ENCODE measurements at regions of chr7 and their contacts with region 1.

Region 1: DNA sequence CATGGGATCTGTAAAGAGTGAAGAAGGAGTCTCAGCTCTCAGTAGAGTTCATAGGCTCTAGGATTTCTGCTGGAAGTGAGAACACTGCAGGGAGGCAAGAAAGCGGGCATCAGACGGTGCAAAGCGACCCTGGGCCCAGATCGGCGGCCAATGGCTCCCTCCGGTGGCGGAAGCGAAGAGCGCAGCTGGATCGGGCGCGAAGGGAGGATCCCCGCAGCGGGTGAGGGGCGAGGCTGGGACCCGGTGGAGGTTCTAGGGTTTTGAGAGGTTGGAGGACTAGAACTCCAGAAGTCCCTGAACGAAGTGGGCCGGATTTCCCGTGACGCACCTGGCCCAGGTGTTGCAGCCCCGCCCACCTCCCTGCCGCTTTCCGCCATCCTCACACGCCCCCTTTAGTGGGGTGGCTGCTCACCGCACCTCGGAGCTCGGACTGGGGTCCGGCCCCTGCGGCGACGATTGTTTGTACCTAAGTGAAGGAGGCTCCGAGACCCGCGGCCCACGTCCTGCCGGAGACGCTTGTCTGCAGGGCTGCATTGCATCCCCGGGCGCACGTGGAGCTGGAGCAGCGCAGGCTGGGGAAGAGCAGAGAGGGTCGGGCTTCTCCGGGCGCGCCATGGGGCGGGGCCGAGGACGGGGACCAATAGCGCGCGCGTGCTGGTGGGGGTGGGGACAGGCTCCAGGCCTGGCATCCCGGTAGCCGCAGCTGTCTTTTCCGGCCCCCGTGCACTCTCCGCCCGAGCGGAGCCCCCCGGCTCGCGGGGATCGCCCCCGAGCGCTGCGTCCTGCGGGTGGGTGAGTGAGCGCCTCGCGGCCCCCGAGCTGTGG is at the start of gene SLC12A9:
- DNase-seq: peak; percentile 68 to 81 (median 81)
- H3K4me3 ChIP-seq: peak within 1 kb of the TSS; percentile 46 to 82 (median 77)
- H3K27ac ChIP-seq: no peak within 1 kb of the TSS
- H3K4me1 ChIP-seq: peaks cover 0 to 23% (median 19%) of the 10 kb centered on the region in 4 experiments
- H3K27me3 ChIP-seq: no peaks in the 10 kb centered on the region

Region 2: DNA sequence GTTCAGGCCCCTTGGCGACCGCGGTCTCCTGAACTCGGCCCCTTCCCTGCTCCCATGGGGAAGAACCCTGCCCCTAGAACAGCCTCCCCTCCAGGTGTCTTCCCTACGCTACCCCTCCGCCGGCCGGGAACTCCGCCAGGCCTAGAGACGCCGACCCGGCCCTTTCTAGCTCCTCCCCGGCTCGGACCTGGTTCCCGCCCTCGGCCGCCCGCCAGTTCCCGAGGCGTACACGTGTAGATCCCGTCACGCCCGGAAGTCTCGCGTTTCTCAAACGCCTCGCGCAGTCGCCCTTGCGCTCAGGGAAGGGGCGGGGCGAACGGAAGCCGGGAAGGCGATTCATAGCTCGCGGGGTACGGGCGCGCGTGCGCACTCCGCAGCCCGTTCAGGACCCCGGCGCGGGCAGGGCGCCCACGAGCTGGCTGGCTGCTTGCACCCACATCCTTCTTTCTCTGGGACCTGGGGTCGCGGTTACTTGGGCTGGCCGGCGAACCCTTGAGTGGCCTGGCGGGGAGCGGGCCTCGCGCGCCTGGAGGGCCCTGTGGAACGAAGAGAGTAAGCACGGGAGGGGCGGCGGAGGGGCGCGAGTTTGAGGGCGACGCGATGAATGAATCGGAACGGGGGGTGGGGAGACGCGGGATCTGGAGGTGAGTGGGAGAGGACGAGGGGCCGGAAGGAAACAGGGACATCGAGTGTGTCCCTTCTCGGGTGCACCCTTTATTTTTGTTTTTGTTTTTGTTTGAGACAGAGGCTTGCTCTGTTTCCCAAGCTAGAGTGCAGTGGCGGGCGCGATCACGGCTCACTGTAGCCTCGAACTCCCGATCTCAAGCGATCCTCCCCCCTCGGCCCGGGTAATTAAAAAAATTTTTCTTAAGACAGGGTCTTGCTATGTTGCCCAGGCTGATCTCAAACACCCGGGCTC is 146.2 kb before region 1 on chr7 and contains the start of gene POP7:
- CTCF ChIA-PET with region 1: interaction called, 79 read pairs
- POLR2A ChIA-PET with region 1: interaction called, 6 read pairs
- DNase-seq: peak; percentile 98 to 99 (median 98)
- H3K4me3 ChIP-seq: peak within 1 kb of the TSS; percentile 62 to 97 (median 89)
- H3K27ac ChIP-seq: peak within 1 kb of the TSS; percentile 64 to 87
- H3K4me1 ChIP-seq: peaks cover 0 to 23% (median 19%) of the 10 kb centered on the region in 4 experiments
- H3K27me3 ChIP-seq: no peaks in the 10 kb centered on the region

Region 3: DNA sequence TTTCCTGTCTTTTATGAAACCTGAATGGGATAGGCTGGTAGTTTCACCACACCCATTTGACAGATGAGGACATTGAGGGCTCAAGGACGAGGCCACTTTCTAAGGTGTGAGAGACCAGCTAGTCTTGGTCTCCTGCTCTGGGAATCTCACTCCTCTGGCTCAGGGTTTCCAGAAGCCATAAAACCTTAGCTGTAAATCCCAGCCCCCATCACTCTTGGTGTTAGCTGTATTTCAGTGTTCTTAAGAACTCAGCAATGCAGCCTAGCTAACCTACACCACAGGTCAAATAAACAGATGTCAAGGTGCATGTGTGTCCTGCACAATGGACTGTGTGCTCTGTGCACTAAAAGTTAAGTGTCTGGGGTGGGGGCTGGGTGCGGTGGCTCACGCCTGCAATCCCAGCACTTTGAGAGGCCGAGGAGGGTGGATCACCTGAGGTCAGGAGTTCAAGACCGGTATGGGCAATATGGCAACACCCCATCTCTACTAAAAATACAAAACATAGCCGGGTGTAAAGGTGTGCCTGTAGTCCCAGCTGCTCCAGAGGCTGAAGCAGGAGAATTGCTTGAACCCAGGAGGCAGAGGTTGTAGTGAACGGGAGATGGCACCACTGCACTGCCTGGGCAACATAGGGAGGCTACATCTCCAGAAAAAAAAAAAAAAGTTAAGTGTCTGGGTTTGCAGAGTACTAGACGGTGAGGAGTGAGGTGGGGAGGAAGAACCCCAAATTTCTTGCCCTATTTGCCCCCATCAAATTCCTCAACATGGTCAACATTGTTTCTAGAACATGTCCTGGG is 132.5 kb before region 1 on chr7:
- CTCF ChIA-PET with region 1: interaction called, 11 read pairs
- POLR2A ChIA-PET with region 1: no interaction called
- DNase-seq: peak; percentile 31 to 68 (median 65)
- H3K4me3 ChIP-seq: peak overlapping the region in 3 of 7 experiments; percentile 51 to 60 (median 56)
- H3K27ac ChIP-seq: no peak overlapping the region
- H3K4me1 ChIP-seq: peaks cover 0 to 14% (median 8%) of the 10 kb centered on the region in 4 experiments
- H3K27me3 ChIP-seq: peaks cover 0 to 45% (median 29%) of the 10 kb centered on the region in 5 experiments

Region 4: DNA sequence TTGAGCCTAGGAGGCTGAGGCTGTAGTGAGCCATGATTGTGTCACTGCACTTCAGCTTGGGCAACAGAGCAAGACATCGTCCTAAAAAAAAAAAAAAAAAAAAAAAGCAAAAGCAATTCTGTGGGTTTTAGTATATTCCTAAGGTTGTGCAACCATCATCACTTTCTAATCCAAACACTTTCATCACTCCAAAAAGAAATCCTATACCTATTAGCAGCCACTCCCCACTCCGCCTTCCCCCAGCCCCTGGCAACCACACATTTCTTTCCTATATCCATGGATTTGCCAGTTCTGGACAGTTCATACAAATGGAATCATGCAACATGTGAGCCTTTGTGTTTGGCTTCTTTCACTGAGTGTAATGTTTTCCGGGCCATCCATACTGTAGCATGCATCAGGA is 98.5 kb before region 1 on chr7:
- CTCF ChIA-PET with region 1: no interaction called
- POLR2A ChIA-PET with region 1: no interaction called
- DNase-seq: no peak
- H3K4me3 ChIP-seq: no peak overlapping the region
- H3K27ac ChIP-seq: no peak overlapping the region
- H3K4me1 ChIP-seq: no peaks in the 10 kb centered on the region
- H3K27me3 ChIP-seq: peaks cover 5 to 21% (median 7%) of the 10 kb centered on the region in 5 experiments

Region 5: DNA sequence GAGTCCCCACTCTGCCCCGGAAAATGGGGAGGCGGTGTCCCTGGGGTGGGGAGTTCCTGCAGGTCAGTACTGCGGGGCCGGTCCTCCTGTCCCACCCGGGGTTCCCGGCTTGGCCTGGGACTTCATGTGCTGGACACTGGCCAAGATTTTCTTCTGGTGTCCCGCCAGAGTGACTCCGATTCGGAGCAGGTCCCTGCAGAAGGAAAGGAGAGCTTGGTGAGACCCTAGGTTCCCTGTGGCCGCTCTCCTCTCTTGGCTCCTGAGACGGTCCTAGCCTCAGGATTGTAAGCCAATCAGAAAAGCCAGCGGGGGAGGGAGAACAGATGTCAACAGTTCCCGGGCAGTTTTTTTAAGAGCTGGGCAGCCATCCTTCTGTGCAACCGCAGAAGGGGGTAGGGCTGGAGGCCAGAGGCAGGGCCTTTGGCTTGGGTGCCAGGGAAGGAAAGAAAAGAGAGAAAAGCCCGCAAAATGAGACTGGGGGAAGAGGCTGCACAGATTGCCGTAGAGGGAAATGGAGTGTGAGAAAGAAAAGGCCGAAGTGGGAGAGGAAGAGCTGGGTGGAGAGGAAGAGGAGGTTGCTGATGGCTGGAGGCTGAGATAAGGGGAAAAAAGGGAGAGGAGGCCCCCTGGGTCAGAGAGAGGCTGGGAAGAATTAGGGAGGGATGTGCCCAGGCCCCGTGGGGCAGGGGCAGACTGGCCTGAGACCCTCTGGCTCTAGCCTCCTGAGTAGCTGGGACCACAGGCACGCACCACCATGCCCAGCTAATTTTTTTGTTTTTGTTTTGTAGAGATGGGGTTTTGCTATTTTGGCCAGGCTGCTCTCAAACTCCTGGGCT is 48.6 kb before region 1 on chr7:
- CTCF ChIA-PET with region 1: interaction called, 124 read pairs
- POLR2A ChIA-PET with region 1: no interaction called
- DNase-seq: peak; percentile 84 to 93 (median 88)
- H3K4me3 ChIP-seq: peak overlapping the region in 4 of 7 experiments; percentile 39 to 72 (median 50)
- H3K27ac ChIP-seq: peak overlapping the region in 1 of 2 experiments; percentile 61
- H3K4me1 ChIP-seq: peaks cover 0 to 44% (median 37%) of the 10 kb centered on the region in 4 experiments
- H3K27me3 ChIP-seq: no peaks in the 10 kb centered on the region

Region 6: GRCh38 chr7:100827330-100828227 is 24.7 kb before region 1 on chr7 and contains the start of gene EPHB4:
- CTCF ChIA-PET with region 1: interaction called, 43 read pairs
- POLR2A ChIA-PET with region 1: interaction called, 3 read pairs
- DNase-seq: peak in 2 of 3 donors; percentile 39 to 70
- H3K4me3 ChIP-seq: peak within 1 kb of the TSS; percentile 50 to 81 (median 65)
- H3K27ac ChIP-seq: peak within 1 kb of the TSS in 1 of 2 experiments; percentile 49
- H3K4me1 ChIP-seq: peaks cover 0 to 36% (median 34%) of the 10 kb centered on the region in 4 experiments
- H3K27me3 ChIP-seq: peaks cover 0 to 11% (median 0%) of the 10 kb centered on the region in 5 experiments

Region 7: GRCh38 chr7:100837099-100837836 is 15.0 kb before region 1 on chr7:
- CTCF ChIA-PET with region 1: interaction called, 43 read pairs
- POLR2A ChIA-PET with region 1: no interaction called
- DNase-seq: peak; percentile 73 to 75 (median 73)
- H3K4me3 ChIP-seq: peak overlapping the region in 5 of 7 experiments; percentile 39 to 72 (median 59)
- H3K27ac ChIP-seq: peak overlapping the region in 1 of 2 experiments; percentile 64
- H3K4me1 ChIP-seq: peaks cover 0 to 19% (median 11%) of the 10 kb centered on the region in 4 experiments
- H3K27me3 ChIP-seq: no peaks in the 10 kb centered on the region

Region 8: GRCh38 chr7:100887516-100888290 is 35.4 kb after region 1 on chr7:
- CTCF ChIA-PET with region 1: interaction called, 13 read pairs
- POLR2A ChIA-PET with region 1: no interaction called
- DNase-seq: peak; percentile 86 to 92 (median 87)
- H3K4me3 ChIP-seq: peak overlapping the region in 4 of 7 experiments; percentile 4 to 52 (median 18)
- H3K27ac ChIP-seq: peak overlapping the region in 1 of 2 experiments; percentile 15
- H3K4me1 ChIP-seq: peaks cover 4 to 63% (median 55%) of the 10 kb centered on the region in 4 experiments
- H3K27me3 ChIP-seq: peaks cover 0 to 19% (median 5%) of the 10 kb centered on the region in 5 experiments

Measured in common myeloid progenitor, CD34-positive (primary cell).